B cell (primary cell): ENCODE measurements at regions of chr16 and their contacts with region 1.

Region 1: DNA sequence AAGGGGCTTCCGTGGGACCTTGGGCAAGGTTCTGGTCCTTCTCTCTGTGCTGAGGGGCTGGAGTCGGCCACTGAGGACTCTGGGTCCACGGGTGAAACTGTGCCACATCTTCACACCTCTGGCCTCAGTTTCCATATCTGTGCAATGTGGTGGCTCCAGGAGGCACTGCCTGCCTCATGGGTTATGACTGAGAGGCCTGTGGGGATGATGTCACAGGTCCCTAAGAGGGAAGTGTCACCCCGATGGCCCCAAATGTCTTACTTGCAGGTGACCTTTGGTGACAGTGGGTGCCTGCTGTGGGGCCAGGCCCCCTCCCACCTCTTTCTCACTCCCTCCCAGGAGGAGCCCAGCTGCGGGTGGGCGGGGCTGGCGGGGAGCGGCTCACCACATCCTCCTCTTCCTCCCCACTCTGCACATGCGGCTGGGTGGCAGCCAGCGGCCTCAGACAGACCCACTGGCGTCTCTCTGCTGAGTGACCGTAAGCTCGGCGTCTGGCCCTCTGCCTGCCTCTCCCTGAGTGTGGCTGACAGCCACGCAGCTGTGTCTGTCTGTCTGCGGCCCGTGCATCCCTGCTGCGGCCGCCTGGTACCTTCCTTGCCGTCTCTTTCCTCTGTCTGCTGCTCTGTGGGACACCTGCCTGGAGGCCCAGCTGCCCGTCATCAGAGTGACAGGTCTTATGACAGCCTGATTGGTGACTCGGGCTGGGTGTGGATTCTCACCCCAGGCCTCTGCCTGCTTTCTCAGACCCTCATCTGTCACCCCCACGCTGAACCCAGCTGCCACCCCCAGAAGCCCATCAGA is at the start of gene IL21R:
- DNase-seq: peak; percentile 91
- ATAC-seq: peak; percentile 64
- H3K4me3 ChIP-seq: peak within 1 kb of the TSS; percentile 54 to 90 (median 86)
- H3K4me3 Mint-ChIP-seq: peak within 1 kb of the TSS; percentile 98
- H3K27ac ChIP-seq: peak within 1 kb of the TSS; percentile 90 to 96
- H3K27ac Mint-ChIP-seq: peak within 1 kb of the TSS; percentile 97
- H3K4me1 ChIP-seq: peaks cover 83 to 99% of the 10 kb centered on the region in 2 donors
- H3K4me1 Mint-ChIP-seq: peaks cover 90% of the 10 kb centered on the region
- H3K27me3 ChIP-seq: no peaks in the 10 kb centered on the region
- H3K27me3 Mint-ChIP-seq: no peaks in the 10 kb centered on the region
- CTCF ChIP-seq: no peak
- total RNA-seq, gene IL21R: 28.5 and 31.6 TPM in 2 replicates

Region 2: GRCh38 chr16:27203429-27204231 is 198.3 kb before region 1 on chr16 and contains the start of gene KDM8:
- CTCF ChIA-PET with region 1: interaction called, 3 read pairs
- POLR2A ChIA-PET with region 1: interaction called, 7 read pairs
- intact Hi-C with region 1: loop called (anchors 1 kb)
- DNase-seq: peak; percentile 100
- ATAC-seq: peak; percentile 76
- H3K4me3 ChIP-seq: peak within 1 kb of the TSS; percentile 69 to 95 (median 92)
- H3K4me3 Mint-ChIP-seq: peak within 1 kb of the TSS; percentile 97
- H3K27ac ChIP-seq: peak within 1 kb of the TSS; percentile 93 to 94
- H3K27ac Mint-ChIP-seq: peak within 1 kb of the TSS; percentile 100
- H3K4me1 ChIP-seq: peaks cover 50 to 62% of the 10 kb centered on the region in 2 donors
- H3K4me1 Mint-ChIP-seq: peaks cover 67% of the 10 kb centered on the region
- H3K27me3 ChIP-seq: no peaks in the 10 kb centered on the region
- H3K27me3 Mint-ChIP-seq: no peaks in the 10 kb centered on the region
- CTCF ChIP-seq: no peak
- total RNA-seq, gene KDM8: 37.4 and 39.8 TPM in 2 replicates

Region 3: GRCh38 chr16:27313422-27314160 is 88.4 kb before region 1 on chr16 and contains the start of gene IL4R:
- CTCF ChIA-PET with region 1: no interaction called
- POLR2A ChIA-PET with region 1: no interaction called
- intact Hi-C with region 1: loop called (anchors 10 kb)
- DNase-seq: peak; percentile 80
- ATAC-seq: peak; percentile 61
- H3K4me3 ChIP-seq: peak within 1 kb of the TSS; percentile 83 to 98 (median 93)
- H3K4me3 Mint-ChIP-seq: peak within 1 kb of the TSS; percentile 98
- H3K27ac ChIP-seq: peak within 1 kb of the TSS; percentile 90 to 97
- H3K27ac Mint-ChIP-seq: peak within 1 kb of the TSS; percentile 97
- H3K4me1 ChIP-seq: peaks cover 40 to 53% of the 10 kb centered on the region in 2 donors
- H3K4me1 Mint-ChIP-seq: peaks cover 72% of the 10 kb centered on the region
- H3K27me3 ChIP-seq: no peaks in the 10 kb centered on the region
- H3K27me3 Mint-ChIP-seq: no peaks in the 10 kb centered on the region
- CTCF ChIP-seq: no peak
- total RNA-seq, gene IL4R: 311 and 323 TPM in 2 replicates

Region 4: DNA sequence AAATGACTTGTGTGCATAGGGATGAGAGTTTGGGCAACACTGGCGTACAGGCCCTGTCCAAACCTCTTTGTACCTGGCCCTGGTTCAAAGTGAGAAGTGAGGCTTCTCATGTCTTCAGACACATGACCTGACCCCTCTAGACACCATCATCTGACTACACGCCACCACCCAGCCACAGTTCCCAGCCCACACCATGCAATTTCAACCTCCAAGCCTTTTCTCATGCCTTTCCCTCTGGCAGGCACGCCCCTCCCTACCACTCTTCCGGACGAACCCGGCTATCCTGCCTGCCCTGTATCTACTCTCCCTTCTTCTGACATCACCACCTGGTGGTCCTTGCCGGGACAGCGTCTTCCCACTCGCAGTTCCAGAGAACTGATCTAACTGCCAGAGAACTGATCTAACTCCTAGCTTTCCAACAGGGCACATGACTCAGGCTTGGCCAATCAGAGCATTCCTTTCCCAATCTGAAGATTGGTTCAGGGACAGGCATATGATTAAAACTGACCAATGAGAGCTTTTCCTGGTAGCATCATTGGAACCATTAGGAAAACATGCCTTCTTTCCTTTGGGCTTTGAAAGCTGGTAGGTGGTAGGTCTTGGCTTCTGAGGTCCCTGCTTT is 27.1 kb before region 1 on chr16:
- CTCF ChIA-PET with region 1: interaction called, 20 read pairs
- POLR2A ChIA-PET with region 1: interaction called, 13 read pairs
- intact Hi-C with region 1: loop called (anchors 1 kb)
- DNase-seq: no peak
- ATAC-seq: peak; percentile 40
- H3K4me3 ChIP-seq: peak overlapping the region in 2 of 5 experiments; percentile 19 to 30
- H3K4me3 Mint-ChIP-seq: no peak overlapping the region
- H3K27ac ChIP-seq: peak overlapping the region; percentile 72 to 89
- H3K27ac Mint-ChIP-seq: no peak overlapping the region
- H3K4me1 ChIP-seq: peaks cover 68 to 86% of the 10 kb centered on the region in 2 donors
- H3K4me1 Mint-ChIP-seq: peaks cover 39% of the 10 kb centered on the region
- H3K27me3 ChIP-seq: no peaks in the 10 kb centered on the region
- H3K27me3 Mint-ChIP-seq: no peaks in the 10 kb centered on the region
- CTCF ChIP-seq: peak; percentile 53

Region 5: DNA sequence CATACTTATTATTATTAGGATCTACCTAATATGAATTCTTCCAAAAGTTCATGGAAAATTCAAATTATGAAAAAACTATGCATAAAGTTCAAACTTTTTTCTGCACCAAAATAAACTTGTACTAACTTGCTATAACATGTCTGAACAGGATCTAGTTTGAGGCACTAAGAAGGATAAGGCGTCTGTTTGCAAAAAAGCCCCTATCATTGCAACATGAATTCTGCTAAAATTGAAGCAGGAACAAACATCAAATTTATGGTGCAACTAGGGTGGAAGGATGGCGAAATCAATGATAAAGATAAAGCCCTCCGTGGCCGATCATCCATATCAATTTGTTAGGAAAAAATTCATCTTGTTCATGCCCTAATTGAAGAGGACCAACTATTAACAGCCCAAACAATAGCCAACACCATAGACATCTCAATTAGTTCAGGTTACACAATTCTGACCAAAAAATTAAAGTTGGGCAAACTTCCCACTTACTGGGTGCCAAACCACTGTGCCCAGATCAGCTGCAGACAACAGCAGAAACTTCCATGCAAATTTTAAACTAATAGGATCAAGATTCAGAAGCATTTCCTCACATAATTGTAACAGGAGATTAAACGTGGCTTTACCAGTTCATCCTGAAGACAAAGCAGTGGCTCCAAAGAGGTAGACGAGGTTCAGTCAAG is 12.9 kb after region 1 on chr16:
- CTCF ChIA-PET with region 1: no interaction called
- POLR2A ChIA-PET with region 1: interaction called, 6 read pairs
- intact Hi-C with region 1: loop called (anchors 1 kb)
- DNase-seq: no peak
- ATAC-seq: no peak
- H3K4me3 ChIP-seq: no peak overlapping the region
- H3K4me3 Mint-ChIP-seq: no peak overlapping the region
- H3K27ac ChIP-seq: peak overlapping the region in 1 of 2 donors; percentile 34
- H3K27ac Mint-ChIP-seq: peak overlapping the region; percentile 47
- H3K4me1 ChIP-seq: peaks cover 4 to 25% of the 10 kb centered on the region in 2 donors
- H3K4me1 Mint-ChIP-seq: peaks cover 46% of the 10 kb centered on the region
- H3K27me3 ChIP-seq: no peaks in the 10 kb centered on the region
- H3K27me3 Mint-ChIP-seq: no peaks in the 10 kb centered on the region
- CTCF ChIP-seq: no peak

Region 6: DNA sequence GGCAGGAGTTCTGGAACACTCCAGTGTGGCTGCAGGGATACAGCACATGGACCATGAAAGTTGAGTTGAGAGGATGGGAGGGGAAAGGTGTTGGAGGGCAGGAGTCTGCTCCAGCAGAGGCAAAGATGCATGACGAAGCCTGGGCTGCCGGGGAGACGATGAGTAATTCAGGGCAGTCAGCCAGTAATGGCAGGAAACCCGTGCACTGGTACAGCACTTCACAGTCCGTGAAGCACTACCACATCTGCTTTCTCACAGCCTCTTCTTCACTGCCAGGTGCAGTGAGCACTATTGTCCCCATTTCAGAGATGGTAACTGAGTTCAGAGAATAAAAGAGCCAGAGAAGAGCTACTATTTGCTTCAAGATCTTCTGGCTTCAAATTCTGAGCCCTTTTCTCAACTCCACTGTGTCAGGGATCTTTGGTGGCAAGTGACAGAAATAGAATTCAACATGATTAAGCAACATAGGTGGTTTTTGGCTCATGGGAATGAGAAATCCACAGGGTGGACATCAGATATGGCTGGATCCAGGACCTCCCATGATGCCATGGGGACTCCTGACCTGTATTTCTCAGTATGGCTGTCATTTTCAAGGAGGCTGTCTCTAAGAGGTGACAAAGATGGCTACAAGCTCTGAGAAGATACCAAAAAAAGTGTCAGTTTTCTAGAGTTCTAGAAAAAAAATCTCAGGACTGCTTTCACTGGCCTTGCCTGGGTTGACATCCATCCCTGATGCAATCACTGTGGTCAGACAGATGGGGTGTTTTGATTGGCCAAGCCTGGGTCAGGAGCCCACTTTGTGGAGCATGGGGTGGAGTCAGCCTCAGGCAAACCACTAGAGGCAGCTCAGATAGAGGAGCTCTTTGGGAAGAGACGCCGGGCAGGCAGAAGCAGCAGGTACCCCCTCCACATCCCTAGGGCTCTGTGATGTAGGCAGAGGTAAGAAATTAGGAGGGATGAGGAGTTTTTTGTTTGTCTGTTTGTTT is 24.7 kb after region 1 on chr16:
- CTCF ChIA-PET with region 1: interaction called, 6 read pairs
- POLR2A ChIA-PET with region 1: interaction called, 12 read pairs
- intact Hi-C with region 1: loop called (anchors 1 kb)
- DNase-seq: peak; percentile 89
- ATAC-seq: peak; percentile 94
- H3K4me3 ChIP-seq: no peak overlapping the region
- H3K4me3 Mint-ChIP-seq: peak overlapping the region; percentile 68
- H3K27ac ChIP-seq: peak overlapping the region; percentile 74 to 83
- H3K27ac Mint-ChIP-seq: peak overlapping the region; percentile 91
- H3K4me1 ChIP-seq: peaks cover 62 to 76% of the 10 kb centered on the region in 2 donors
- H3K4me1 Mint-ChIP-seq: peaks cover 68% of the 10 kb centered on the region
- H3K27me3 ChIP-seq: no peaks in the 10 kb centered on the region
- H3K27me3 Mint-ChIP-seq: peaks cover 4% of the 10 kb centered on the region
- CTCF ChIP-seq: no peak

Region 7: GRCh38 chr16:27449434-27450195 is 47.6 kb after region 1 on chr16:
- CTCF ChIA-PET with region 1: interaction called, 13 read pairs
- POLR2A ChIA-PET with region 1: interaction called, 13 read pairs
- intact Hi-C with region 1: loop called (anchors 1 kb)
- DNase-seq: peak; percentile 93
- ATAC-seq: peak; percentile 77
- H3K4me3 ChIP-seq: peak overlapping the region in 1 of 5 experiments; percentile 17
- H3K4me3 Mint-ChIP-seq: peak overlapping the region; percentile 91
- H3K27ac ChIP-seq: peak overlapping the region; percentile 79 to 82
- H3K27ac Mint-ChIP-seq: peak overlapping the region; percentile 98
- H3K4me1 ChIP-seq: peaks cover 56 to 76% of the 10 kb centered on the region in 2 donors
- H3K4me1 Mint-ChIP-seq: peaks cover 76% of the 10 kb centered on the region
- H3K27me3 ChIP-seq: no peaks in the 10 kb centered on the region
- H3K27me3 Mint-ChIP-seq: no peaks in the 10 kb centered on the region
- CTCF ChIP-seq: no peak

Region 8: GRCh38 chr16:27600381-27600780 is 198.4 kb after region 1 on chr16:
- CTCF ChIA-PET with region 1: no interaction called
- POLR2A ChIA-PET with region 1: no interaction called
- intact Hi-C with region 1: no loop called
- DNase-seq: no peak
- ATAC-seq: no peak
- H3K4me3 ChIP-seq: no peak overlapping the region
- H3K4me3 Mint-ChIP-seq: no peak overlapping the region
- H3K27ac ChIP-seq: no peak overlapping the region
- H3K27ac Mint-ChIP-seq: no peak overlapping the region
- H3K4me1 ChIP-seq: no peaks in the 10 kb centered on the region
- H3K4me1 Mint-ChIP-seq: no peaks in the 10 kb centered on the region
- H3K27me3 ChIP-seq: no peaks in the 10 kb centered on the region
- H3K27me3 Mint-ChIP-seq: no peaks in the 10 kb centered on the region
- CTCF ChIP-seq: no peak